PC-3 (cell line): ENCODE measurements at regions of chr2 and their contacts with region 1.

Region 1: GRCh38 chr2:82124629-82125028 is 1820.1 kb upstream of the LRRTM1 start:
- DNase-seq: peak; percentile 59
- ATAC-seq: no peak
- H3K4me3 ChIP-seq: no peak overlapping the region
- H3K27ac ChIP-seq: no peak overlapping the region
- H3K4me1 ChIP-seq: peaks cover 12% of the 10 kb centered on the region
- H3K27me3 ChIP-seq: no peaks in the 10 kb centered on the region
- CTCF ChIP-seq: no peak

Region 2: GRCh38 chr2:82062463-82062862 is 62.2 kb before region 1 on chr2:
- CTCF ChIA-PET with region 1: no interaction called
- POLR2A ChIA-PET with region 1: interaction called, 13 read pairs
- intact Hi-C with region 1: no loop called
- DNase-seq: peak; percentile 22
- ATAC-seq: no peak
- H3K4me3 ChIP-seq: no peak overlapping the region
- H3K27ac ChIP-seq: no peak overlapping the region
- H3K4me1 ChIP-seq: no peaks in the 10 kb centered on the region
- H3K27me3 ChIP-seq: no peaks in the 10 kb centered on the region
- CTCF ChIP-seq: no peak

Region 3: DNA sequence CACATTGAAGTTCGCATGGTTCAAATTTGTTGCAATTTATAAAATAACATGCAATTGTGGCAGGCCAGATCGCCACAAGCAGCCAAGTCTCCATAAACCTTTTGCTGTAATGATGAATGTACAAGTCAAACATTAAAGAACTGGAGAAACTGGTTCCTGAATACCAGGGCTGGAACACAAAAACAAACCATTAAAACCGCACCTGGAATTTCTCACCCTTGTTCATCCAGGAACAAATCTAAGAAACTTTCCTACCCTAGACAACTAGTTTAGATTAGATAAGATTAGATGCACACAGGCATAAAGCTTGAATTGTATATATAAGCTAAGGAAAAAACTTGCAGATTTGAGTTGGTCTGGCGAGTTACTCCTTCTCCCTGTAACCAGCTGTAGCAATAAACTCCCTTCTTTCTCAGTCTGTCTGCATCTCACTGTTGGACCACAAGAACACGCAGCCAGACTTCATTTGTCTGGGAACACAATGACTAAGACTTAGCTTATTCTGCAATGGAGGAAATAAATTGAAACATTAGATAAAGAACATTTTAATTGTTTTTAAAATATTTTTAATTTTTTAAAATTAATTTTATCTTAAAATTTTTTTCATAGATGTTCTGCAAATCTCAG is 15.5 kb after region 1 on chr2:
- CTCF ChIA-PET with region 1: no interaction called
- POLR2A ChIA-PET with region 1: no interaction called
- intact Hi-C with region 1: no loop called
- DNase-seq: peak; percentile 93
- ATAC-seq: peak; percentile 76
- H3K4me3 ChIP-seq: peak overlapping the region; percentile 33; the same call in 1 of the 2 replicates
- H3K27ac ChIP-seq: peak overlapping the region; percentile 83
- H3K4me1 ChIP-seq: peaks cover 21% of the 10 kb centered on the region
- H3K27me3 ChIP-seq: no peaks in the 10 kb centered on the region
- CTCF ChIP-seq: no peak